ENCODE measurements at regions of chr12 and their contacts with region 1.

Region 1: DNA sequence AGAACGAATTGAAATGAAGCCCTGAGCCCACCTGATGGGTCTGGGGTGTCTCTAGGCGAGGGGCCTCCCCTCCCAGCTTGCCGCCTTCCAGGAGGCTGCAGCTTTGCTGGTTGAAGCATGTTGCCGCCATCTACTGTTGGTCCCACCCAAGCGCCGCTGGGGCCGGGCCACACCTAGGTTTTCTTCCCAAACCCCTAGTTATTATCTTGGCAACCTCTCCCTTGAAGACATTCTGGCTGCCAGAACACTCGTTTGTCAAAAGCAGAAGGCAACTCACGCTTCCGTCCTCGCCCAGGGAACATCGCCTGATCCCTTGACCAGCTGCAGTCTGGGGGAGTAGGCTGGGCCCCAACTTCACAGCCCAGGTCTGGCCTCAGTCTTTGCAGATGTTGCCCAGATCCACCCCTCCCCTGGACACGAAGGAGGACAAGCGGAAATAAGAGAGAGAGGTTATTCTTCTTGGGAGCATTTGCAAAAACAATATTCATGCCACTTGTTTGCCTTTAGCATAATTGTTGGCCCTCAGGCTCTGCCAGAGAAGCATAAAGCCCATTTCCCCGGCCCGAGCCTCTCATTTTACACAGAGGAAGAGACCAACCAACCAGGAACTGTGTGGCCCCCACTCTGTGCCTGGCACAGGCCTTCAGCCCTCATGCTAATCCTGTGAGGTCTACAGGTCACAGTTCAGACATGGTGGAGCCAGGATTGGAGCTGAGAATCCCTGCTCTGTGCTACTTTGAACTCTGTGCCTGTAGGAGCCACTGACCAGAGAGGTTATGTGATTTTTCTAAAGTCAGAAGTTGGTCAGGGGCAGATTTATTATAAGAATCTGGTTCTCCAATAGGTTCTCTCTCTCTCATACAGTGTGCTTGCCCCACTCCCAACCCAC is 6.8 kb downstream of the EMP1 start:
- DNase-seq: peak; percentile 25 to 53 (median 40)
- H3K4me3 ChIP-seq: no peak overlapping the region
- H3K27ac ChIP-seq: no peak overlapping the region
- H3K4me1 ChIP-seq: peaks cover 16 to 98% (median 79%) of the 10 kb centered on the region in 4 experiments
- H3K27me3 ChIP-seq: no peaks in the 10 kb centered on the region

Region 2: DNA sequence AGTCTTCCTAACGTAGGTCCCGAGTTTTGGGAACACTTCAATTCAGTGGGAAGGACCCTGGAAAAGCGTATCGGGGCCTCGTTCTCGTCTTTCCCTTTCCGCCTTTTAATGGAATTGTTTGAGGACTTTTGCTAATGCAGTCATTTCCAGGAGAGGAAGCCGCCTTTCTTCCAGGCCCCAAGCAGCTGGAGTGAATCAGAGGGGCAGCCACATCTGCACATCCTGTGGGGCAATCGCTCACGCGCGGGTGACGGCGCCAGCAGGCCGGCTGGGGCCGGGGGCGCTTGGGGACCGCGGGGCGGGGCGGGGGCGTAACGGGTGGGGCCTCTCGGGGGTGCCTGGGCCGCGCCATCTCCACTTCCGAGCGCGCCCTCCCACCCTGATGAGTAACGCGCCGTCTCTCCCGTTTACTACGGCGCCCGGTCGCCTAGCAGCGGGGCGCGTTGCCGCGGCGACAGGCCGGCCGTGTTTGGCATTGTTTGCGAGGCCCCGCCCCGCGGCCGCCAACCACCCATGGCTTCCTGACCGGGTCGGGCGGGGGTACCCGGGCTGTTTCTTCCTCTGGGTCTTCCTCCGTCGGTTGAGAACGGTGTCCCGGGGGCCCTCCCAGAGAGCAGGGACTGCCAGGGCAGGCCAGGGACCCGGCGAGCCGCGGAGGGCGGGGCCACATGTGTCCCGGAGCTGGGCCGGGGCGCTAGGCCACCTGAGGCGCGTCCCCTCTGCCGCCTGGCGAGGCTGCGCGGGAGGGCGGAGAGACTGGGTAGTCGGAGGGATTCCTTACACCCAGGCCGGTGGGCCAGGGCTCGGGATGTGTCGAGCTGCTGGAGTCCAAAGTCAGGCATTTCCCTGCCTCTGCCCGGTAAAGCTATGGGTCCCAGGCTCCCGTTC is 102.2 kb before region 1 on chr12:
- CTCF ChIA-PET with region 1: interaction called, 47 read pairs
- POLR2A ChIA-PET with region 1: interaction called, 4 read pairs
- DNase-seq: peak; percentile 96 to 99 (median 99)
- H3K4me3 ChIP-seq: peak overlapping the region in 6 of 7 experiments; percentile 41 to 72 (median 64)
- H3K27ac ChIP-seq: peak overlapping the region; percentile 97 to 99
- H3K4me1 ChIP-seq: peaks cover 31 to 74% (median 72%) of the 10 kb centered on the region in 4 experiments
- H3K27me3 ChIP-seq: no peaks in the 10 kb centered on the region

Measured in common myeloid progenitor, CD34-positive (primary cell).